ENCODE measurements at regions of chr13 and their contacts with region 1.

Region 1: GRCh38 chr13:48233046-48233907 is at the start of gene ITM2B:
- DNase-seq: peak; percentile 64
- H3K4me3 ChIP-seq: peak within 1 kb of the TSS; percentile 89 to 99 (median 99)
- H3K27ac ChIP-seq: peak within 1 kb of the TSS; percentile 92
- H3K4me1 ChIP-seq: peaks cover 27% of the 10 kb centered on the region
- H3K27me3 ChIP-seq: no peaks in the 10 kb centered on the region
- CTCF ChIP-seq: peak in 1 of 2 donors; percentile 45
- total RNA-seq, gene ITM2B: 187 to 317 TPM

Region 2: GRCh38 chr13:48094781-48095502 is 138.3 kb before region 1 on chr13 and contains the start of gene MED4:
- CTCF ChIA-PET with region 1: no interaction called
- dilution Hi-C with region 1: no loop called
- in situ Hi-C with region 1: no loop called
- intact Hi-C with region 1: loop called (anchors 1 kb)
- DNase-seq: peak; percentile 92
- H3K4me3 ChIP-seq: peak within 1 kb of the TSS; percentile 73 to 98 (median 86)
- H3K27ac ChIP-seq: peak within 1 kb of the TSS; percentile 83
- H3K4me1 ChIP-seq: peaks cover 10% of the 10 kb centered on the region
- H3K27me3 ChIP-seq: no peaks in the 10 kb centered on the region
- CTCF ChIP-seq: peak; percentile 98 to 100
- total RNA-seq, gene MED4: 24.8 to 43.1 TPM

Region 3: DNA sequence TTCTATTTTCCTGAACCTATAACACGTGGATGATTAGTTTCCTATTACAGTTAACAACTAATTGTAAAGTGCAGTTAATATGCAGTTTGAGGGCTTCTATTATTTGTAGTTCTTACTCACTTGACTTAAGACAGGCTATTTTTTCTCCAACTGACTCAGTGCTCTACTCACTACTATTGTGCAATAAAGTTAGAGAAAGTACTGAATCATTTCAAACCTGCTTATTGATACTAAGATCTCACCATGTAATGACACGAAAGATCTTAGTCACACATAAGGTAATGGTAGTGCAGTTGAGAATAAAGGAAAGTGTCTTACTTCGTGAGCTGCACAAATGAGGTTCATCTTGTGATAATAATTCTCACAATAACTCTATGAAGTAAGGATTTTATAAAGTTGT is 23.1 kb before region 1 on chr13:
- CTCF ChIA-PET with region 1: no interaction called
- dilution Hi-C with region 1: no loop called
- in situ Hi-C with region 1: no loop called
- intact Hi-C with region 1: loop called (anchors 2 kb)
- DNase-seq: peak; percentile 95
- H3K4me3 ChIP-seq: no peak overlapping the region
- H3K27ac ChIP-seq: peak overlapping the region; percentile 74
- H3K4me1 ChIP-seq: peaks cover 13% of the 10 kb centered on the region
- H3K27me3 ChIP-seq: no peaks in the 10 kb centered on the region
- CTCF ChIP-seq: no peak

Region 4: DNA sequence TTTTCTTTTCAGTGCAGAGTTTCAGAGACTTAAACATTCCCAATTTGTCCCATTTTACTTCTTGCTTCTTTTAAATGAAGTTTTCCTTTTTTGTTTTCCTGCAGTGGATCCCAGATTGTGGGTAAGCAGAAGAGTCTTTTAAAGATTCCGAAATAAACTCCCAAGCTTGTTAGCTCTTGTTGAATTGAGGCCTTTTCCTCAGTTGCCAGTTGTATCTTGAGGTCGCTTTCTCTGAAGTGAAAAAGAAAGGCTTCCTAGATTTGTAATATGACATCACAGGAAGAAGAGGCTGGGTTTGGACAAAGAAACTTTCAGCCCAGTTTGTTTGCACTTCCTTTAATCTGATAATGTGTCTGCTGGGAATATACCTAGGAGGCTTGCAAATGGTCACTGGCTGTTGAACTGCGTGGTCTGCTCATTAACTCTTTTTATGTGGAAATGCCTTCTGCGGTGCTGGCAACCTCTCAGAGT is 179.6 kb after region 1 on chr13 and contains the start of gene LPAR6:
- CTCF ChIA-PET with region 1: no interaction called
- dilution Hi-C with region 1: no loop called
- in situ Hi-C with region 1: no loop called
- intact Hi-C with region 1: loop called (anchors 5 kb)
- DNase-seq: peak; percentile 62
- H3K4me3 ChIP-seq: peak within 1 kb of the TSS; percentile 62 to 78 (median 67)
- H3K27ac ChIP-seq: peak within 1 kb of the TSS; percentile 85
- H3K4me1 ChIP-seq: no peaks in the 10 kb centered on the region
- H3K27me3 ChIP-seq: no peaks in the 10 kb centered on the region
- CTCF ChIP-seq: no peak
- total RNA-seq, gene LPAR6: 7.9 to 17.2 TPM